GM10248 (cell line): ENCODE measurements at regions of chr3 and their contacts with region 1.

Region 1: DNA sequence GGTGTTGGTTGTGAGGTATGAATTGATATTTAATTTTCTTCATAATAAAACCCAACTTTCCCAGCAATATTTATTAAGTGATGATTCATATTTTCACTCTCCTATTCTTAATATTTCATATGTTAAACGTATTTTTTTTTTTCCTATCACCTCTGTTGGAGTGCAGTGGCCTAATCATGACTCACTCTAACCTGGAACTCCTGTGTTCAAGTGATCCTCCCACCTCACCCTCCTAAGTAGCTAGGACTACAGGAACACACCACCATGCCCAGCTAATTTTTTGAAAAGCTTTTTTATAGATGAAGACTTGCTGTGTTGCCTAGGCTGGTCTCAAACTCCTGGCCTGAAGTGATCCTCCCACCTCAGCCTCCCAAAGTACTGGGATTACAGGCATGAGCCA is 8.6 kb downstream of the PARP15 start:
- DNase-seq: no peak
- CTCF ChIP-seq: no peak

Region 2: DNA sequence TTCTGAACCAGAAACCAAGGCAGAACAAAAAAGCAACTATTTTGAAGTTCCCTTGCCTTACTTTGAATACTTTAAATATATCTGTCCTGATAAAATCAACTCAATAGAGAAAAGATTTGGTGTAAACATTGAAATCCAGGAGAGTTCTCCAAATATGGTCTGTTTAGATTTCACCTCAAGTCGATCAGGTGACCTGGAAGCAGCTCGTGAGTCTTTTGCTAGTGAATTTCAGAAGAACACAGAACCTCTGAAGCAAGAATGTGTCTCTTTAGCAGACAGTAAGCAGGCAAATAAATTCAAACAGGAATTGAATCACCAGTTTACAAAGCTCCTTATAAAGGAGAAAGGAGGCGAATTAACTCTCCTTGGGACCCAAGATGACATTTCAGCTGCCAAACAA is 17.3 kb before region 1 on chr3:
- CTCF ChIA-PET with region 1: no interaction called
- POLR2A ChIA-PET with region 1: no interaction called
- DNase-seq: no peak
- CTCF ChIP-seq: no peak

Region 3: DNA sequence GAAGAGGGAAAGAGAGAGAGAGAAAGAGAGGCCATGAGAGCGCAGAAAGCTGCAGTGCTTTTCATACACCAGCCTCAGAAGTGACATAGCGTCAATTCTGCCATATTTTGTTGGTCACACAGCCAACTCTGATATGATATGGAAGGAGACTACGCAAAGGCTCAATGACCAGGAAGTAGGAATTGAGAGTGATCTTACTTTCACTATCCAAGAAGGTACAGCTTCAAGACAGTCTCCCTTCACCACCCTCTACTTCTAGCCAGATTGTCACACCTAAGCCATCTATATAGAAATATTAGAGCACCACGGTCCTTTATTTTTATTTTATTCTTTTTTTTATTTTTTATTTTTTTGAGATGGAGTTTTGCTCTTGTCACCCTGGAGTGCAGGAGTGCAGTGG is 12.5 kb after region 1 on chr3:
- CTCF ChIA-PET with region 1: interaction called, 11 read pairs
- POLR2A ChIA-PET with region 1: no interaction called
- DNase-seq: no peak
- CTCF ChIP-seq: no peak

Region 4: DNA sequence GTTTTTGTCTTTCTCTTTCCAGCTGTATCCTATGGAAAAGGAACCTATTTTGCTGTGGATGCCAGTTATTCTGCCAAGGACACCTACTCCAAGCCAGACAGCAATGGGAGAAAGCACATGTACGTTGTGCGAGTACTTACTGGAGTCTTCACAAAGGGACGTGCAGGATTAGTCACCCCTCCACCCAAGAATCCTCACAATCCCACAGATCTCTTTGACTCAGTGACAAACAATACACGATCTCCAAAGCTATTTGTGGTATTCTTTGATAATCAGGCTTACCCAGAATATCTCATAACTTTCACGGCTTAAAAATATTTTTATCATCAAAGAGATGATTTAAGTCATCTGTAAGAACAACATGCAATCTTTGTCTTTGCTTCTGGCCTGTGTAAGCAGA is 49.7 kb after region 1 on chr3:
- CTCF ChIA-PET with region 1: no interaction called
- POLR2A ChIA-PET with region 1: no interaction called
- DNase-seq: no peak
- CTCF ChIP-seq: no peak

Region 5: DNA sequence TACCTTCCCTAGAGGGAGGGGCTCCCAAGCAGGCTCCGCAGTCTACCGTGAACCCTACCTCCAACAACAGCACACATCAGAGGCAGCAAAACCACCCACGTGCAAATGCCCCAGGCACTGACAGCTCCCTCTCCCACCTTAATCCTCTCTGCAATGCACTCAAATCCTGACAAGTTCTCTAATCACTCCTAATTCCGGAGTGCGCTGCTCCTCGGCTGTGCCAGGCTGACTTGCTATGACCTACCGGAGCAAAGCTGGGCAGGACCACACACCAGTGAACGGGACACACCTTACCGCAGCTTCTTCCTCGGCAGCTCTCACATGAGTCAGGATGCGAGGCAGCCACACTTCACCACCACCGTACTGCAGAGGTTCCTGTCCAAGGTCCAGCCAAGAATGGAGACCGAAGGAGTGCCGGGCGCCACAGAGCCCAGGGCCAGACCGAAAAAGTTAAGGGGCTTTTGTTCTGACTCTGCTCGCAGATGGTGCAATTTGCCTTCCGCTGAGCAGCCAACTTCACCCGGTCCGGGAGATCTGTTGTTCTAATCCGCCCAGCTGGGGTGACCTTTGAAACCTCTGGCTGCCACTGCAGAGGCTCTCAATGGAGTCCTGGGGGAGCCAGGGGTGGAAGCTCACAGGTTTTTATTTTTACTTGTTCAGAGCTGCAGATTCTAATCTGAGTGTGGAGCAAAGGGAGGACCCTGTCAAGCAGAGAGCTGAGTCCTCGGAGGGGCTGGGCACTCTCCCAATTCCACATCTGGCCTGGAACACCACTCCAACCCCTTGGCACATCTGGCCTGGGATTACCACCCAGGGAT is 1213.7 kb after region 1 on chr3:
- CTCF ChIA-PET with region 1: no interaction called
- POLR2A ChIA-PET with region 1: no interaction called
- DNase-seq: no peak
- CTCF ChIP-seq: no peak